ENCODE measurements at regions of chr1 and their contacts with region 1.

Region 1: GRCh38 chr1:221203224-221204054 is 324.2 kb downstream of the HLX start:
- DNase-seq: peak; percentile 80 to 84 (median 82)
- ATAC-seq: peak; percentile 86
- H3K4me3 ChIP-seq: no peak overlapping the region
- H3K27ac ChIP-seq: peak overlapping the region in 2 of 4 donors; percentile 1 to 29
- H3K4me1 ChIP-seq: peaks cover 34% of the 10 kb centered on the region
- H3K27me3 ChIP-seq: no peaks in the 10 kb centered on the region
- CTCF ChIP-seq: peak; percentile 67 to 82 (median 76)
- POLR2A ChIP-seq: no peak

Region 2: DNA sequence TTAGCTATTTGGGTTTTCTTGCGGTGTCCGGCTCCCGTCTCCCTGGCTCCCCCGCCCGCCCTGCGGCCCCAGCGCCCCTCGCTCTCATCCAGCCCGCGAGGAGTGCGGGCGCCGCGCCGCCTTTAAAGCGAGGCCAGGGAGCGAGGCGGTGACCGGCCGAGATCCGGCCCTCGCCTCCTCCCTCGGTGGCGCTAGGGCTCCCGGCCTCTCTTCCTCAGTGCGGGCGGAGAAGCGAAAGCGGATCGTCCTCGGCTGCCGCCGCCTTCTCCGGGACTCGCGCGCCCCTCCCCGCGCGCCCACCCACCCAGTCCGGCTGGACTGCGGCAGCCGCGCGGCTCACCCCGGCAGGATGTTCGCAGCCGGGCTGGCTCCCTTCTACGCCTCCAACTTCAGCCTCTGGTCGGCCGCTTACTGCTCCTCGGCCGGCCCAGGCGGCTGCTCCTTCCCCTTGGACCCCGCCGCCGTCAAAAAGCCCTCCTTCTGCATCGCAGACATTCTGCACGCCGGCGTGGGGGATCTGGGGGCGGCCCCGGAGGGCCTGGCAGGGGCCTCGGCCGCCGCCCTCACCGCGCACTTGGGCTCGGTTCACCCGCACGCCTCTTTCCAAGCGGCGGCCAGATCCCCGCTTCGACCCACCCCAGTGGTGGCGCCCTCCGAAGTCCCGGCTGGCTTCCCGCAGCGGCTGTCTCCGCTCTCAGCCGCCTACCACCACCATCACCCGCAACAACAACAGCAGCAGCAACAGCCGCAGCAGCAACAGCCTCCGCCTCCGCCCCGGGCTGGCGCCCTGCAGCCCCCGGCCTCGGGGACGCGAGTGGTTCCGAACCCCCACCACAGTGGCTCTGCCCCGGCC is 323.7 kb before region 1 on chr1:
- intact Hi-C with region 1: loop called (anchors 10 kb)
- DNase-seq: peak in 3 of 4 donors; percentile 38 to 48 (median 47)
- ATAC-seq: peak; percentile 68
- H3K4me3 ChIP-seq: peak overlapping the region; percentile 69 to 74
- H3K27ac ChIP-seq: peak overlapping the region in 3 of 4 donors; percentile 75 to 83 (median 76)
- H3K4me1 ChIP-seq: peaks cover 29% of the 10 kb centered on the region
- H3K27me3 ChIP-seq: peaks cover 0 to 7% of the 10 kb centered on the region in 2 donors
- CTCF ChIP-seq: no peak
- POLR2A ChIP-seq: no peak

Region 3: DNA sequence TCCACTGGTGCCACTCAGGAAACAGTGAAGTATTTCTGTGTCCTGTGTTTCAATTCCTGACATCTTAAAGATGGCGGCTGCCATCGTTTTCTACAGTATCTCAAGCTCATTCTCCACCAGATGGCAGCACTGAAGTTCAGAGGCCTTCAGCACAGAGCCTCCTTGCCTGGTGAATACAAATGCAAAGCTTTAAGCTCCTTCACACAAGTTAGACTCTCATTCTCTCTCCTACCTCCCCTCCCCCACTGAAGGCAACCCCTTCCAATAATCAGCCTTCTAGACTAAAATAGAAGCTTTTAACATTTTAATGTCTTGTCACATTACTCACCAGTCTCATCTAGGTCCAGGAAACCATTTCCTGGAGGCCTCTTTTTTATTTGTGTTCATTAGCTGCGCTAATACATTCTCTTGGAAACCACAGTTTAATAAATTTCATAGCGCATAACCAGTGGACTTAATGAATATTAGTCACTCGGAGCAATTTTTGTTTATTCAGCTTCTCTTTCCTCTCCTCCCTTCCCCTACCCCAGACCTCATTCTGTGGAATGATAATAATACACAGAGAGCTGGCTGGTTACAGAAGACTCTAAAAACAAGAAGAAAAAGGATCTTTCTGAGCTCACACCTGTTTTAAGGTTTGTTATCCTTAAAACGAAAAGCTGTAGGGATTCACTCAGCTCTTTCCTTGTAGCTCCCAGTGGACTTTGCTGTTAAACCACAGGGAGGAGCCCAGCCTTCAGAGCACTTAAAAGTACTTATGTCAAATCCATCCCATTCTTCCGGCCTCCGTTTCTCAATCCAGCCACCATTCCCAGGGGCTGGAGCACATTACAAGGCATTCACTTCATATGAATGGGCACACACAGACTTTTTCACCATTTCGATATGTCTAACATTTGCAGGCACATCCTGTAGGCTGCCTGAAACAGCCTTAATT is 60.7 kb after region 1 on chr1:
- intact Hi-C with region 1: no loop called
- DNase-seq: peak; percentile 36 to 72 (median 50)
- ATAC-seq: peak; percentile 56
- H3K4me3 ChIP-seq: no peak overlapping the region
- H3K27ac ChIP-seq: no peak overlapping the region
- H3K4me1 ChIP-seq: no peaks in the 10 kb centered on the region
- H3K27me3 ChIP-seq: no peaks in the 10 kb centered on the region
- CTCF ChIP-seq: peak in 5 of 7 experiments; percentile 10 to 43 (median 37)
- POLR2A ChIP-seq: no peak